Transverse colon (tissue), 4 donors: ENCODE measurements at regions of chr10 and their contacts with region 1.

Region 1: GRCh38 chr10:53827261-53827660 is 973.8 kb downstream of the PCDH15 start:
- DNase-seq: no peak
- H3K4me3 ChIP-seq: no peak overlapping the region
- H3K27ac ChIP-seq: no peak overlapping the region
- H3K4me1 ChIP-seq: no peaks in the 10 kb centered on the region
- H3K27me3 ChIP-seq: no peaks in the 10 kb centered on the region
- CTCF ChIP-seq: no peak
- EP300 ChIP-seq: no peak
- POLR2A ChIP-seq: no peak

Region 2: DNA sequence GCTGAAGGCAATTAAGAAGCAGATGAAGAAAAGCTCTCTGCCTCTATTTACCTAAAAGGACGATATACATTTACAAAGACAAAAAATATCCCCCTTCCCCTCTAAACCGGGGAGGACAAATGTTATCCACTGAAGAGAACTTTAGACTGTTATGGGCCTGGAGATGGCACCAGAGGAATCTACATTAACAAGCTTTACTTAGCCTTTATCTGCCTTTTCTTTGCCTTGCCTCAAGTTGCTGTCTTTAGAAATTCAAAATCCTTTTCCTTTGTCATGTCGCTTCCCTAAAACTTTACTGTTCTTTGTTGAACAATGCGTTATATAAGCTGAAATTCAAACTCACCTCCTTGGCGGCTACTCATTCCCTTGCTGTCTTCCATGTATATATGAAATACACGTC is 568.7 kb after region 1 on chr10:
- in situ Hi-C with region 1: no loop called
- intact Hi-C with region 1: loop called (anchors 10 kb)
- DNase-seq: no peak
- H3K4me3 ChIP-seq: no peak overlapping the region
- H3K27ac ChIP-seq: no peak overlapping the region
- H3K4me1 ChIP-seq: no peaks in the 10 kb centered on the region
- H3K27me3 ChIP-seq: no peaks in the 10 kb centered on the region
- CTCF ChIP-seq: no peak
- EP300 ChIP-seq: no peak
- POLR2A ChIP-seq: no peak